ENCODE measurements at regions of chr9 and their contacts with region 1.

Region 1: DNA sequence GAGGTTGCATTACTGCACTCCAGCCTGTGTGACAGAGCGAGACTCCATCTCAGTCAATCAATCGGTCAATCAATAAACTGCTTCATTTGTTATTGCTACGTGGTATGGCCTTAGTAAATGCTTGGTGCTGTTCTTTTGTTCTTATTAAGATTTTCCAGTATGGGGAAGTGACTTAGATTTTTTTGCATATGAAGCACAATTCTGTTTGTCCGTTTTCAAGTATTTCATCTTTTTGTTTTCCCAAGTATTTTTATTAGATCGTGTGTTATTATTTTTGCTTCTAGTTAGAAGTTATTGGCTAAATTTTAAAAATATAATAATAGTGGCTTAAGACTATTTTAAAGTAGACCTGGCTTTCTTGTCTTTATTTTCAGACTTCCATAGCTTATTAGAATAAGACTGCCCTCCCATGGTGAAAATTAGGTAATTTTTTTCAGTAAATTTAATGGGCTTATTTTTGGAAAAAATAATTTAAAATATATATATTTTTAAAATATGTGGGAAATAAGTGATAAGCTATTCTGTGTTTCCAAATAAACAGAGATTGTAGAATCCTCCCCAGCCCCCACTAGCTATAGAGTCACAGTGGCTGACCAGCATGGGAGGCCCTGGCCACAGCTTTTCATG is 14.7 kb upstream of the OMD start:
- DNase-seq: no peak
- H3K4me3 ChIP-seq: no peak overlapping the region
- H3K27ac ChIP-seq: no peak overlapping the region
- H3K4me1 ChIP-seq: peaks cover 7% of the 10 kb centered on the region
- H3K27me3 ChIP-seq: no peaks in the 10 kb centered on the region
- CTCF ChIP-seq: peak in 1 of 2 donors; percentile 20

Region 2: DNA sequence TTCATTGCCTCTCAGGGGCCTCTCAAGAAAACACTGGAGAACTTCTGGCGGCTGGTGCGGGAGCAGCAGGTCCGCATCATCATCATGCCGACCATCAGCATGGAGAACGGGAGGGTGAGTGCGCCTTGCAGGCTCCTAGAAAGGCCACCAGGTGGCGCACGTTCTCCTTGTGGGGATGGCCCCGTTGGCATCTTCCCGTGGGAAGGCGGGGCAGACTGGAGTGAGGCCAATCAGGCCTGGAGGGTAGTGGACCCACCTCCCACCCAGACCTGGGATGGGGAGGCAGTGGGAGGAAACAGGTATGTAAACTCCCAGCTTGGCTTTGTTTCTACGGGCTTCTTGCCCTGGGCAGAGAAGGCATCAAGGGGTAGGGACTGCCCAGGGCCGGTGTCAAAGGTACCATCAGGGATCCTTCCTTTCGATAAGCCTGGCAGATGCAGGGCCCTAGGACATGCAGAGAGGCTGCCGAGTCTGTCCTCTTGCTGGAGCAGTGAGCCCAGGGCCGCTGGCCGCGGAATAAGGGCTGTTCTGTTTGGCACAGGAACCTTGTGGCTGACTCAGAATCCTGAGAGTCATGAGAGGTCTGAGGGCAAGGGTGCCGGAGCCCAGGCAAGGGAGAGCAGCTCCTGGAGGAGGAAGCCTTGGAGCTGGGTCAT is 304.9 kb before region 1 on chr9:
- CTCF ChIA-PET with region 1: no interaction called
- dilution Hi-C with region 1: no loop called
- in situ Hi-C with region 1: no loop called
- intact Hi-C with region 1: loop called (anchors 1 kb)
- DNase-seq: peak; percentile 80
- H3K4me3 ChIP-seq: peak overlapping the region in 1 of 3 experiments; percentile 31
- H3K27ac ChIP-seq: no peak overlapping the region
- H3K4me1 ChIP-seq: peaks cover 11% of the 10 kb centered on the region
- H3K27me3 ChIP-seq: no peaks in the 10 kb centered on the region
- CTCF ChIP-seq: peak; percentile 94 to 98

Region 3: GRCh38 chr9:92140074-92140753 is 298.8 kb before region 1 on chr9:
- CTCF ChIA-PET with region 1: no interaction called
- dilution Hi-C with region 1: no loop called
- in situ Hi-C with region 1: no loop called
- intact Hi-C with region 1: loop called (anchors 1 kb)
- DNase-seq: peak; percentile 52
- H3K4me3 ChIP-seq: no peak overlapping the region
- H3K27ac ChIP-seq: no peak overlapping the region
- H3K4me1 ChIP-seq: peaks cover 12% of the 10 kb centered on the region
- H3K27me3 ChIP-seq: no peaks in the 10 kb centered on the region
- CTCF ChIP-seq: peak; percentile 81 to 93

Region 4: GRCh38 chr9:92325269-92325990 is 113.6 kb before region 1 on chr9 and contains the starts of genes CENPP and NOL8:
- CTCF ChIA-PET with region 1: interaction called, 4 read pairs
- dilution Hi-C with region 1: no loop called
- in situ Hi-C with region 1: loop called (anchors 10 to 25 kb)
- intact Hi-C with region 1: loop called (anchors 1 kb)
- DNase-seq: peak; percentile 91
- H3K4me3 ChIP-seq: peak within 1 kb of the TSS; percentile 80 to 99 (median 93)
- H3K27ac ChIP-seq: peak within 1 kb of the TSS; percentile 98
- H3K4me1 ChIP-seq: peaks cover 27% of the 10 kb centered on the region
- H3K27me3 ChIP-seq: no peaks in the 10 kb centered on the region
- CTCF ChIP-seq: no peak
- total RNA-seq, gene CENPP: 3.0 to 7.5 TPM
- total RNA-seq, gene NOL8: 21.8 to 42.4 TPM

Region 5: DNA sequence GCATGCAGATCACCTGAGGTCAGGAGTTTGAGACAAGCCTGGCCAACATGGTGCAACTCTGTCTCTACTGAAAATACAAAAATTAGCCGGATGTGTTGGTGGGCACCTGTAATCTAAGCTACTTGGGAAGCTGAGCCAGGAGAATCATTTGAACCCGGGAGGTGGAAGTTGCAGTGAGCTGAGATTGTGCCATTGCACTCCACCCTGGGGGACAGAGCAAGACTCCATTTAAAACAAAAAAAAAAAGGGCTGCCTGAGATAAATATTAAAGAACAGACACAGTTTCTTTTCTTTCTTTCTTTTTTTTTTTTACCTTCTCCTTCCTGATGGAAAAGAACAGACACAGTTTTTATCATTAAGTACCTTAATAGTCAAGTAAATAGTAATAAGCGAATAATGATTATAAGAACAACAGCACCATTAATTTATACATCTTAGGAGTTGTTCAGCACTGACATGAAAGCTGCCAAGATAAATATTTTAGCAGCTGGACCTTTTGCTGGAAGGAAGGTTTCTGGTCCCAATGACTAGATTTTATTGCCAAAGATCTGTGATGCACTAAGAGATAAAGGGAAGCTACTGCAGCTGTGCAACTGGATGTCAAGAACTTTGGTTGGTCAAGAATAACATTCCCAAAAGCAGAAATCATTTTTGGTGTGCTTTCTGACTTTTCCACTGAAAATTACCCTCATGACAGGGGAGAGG is 106.3 kb before region 1 on chr9:
- CTCF ChIA-PET with region 1: interaction called, 4 read pairs
- dilution Hi-C with region 1: no loop called
- in situ Hi-C with region 1: loop called (anchors 10 to 25 kb)
- intact Hi-C with region 1: loop called (anchors 1 kb)
- DNase-seq: no peak
- H3K4me3 ChIP-seq: no peak overlapping the region
- H3K27ac ChIP-seq: no peak overlapping the region
- H3K4me1 ChIP-seq: peaks cover 2% of the 10 kb centered on the region
- H3K27me3 ChIP-seq: no peaks in the 10 kb centered on the region
- CTCF ChIP-seq: no peak

Region 6: DNA sequence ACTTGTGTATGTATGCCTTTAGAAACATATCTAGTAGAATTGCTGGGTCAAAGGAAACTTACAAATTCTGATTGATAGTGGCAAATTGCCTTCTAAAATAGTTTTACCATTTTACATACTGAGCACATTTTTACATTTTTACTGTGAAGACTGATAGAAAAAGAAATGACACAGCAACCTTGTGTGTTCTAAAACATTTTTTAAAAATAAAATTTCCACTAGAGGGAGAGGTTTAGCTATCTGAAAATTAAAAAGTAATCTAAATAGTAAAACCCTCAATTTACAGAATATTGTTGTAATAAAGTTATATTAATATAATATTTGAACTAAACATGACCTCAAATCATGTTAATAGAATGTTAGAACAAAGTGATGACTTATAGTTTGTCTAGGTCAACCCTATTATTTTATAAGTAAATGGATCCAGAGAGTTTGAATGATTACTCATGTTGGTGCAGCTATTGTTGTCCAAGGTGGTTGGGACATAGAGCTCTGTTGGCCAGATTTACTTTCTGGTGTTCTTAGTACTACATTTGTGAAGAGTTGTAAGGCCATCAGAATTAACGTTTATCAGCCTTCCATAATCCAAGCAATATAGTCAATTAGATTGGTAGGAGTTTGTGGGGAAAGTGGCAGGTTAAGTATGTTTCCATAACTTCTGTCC is 96.1 kb before region 1 on chr9:
- CTCF ChIA-PET with region 1: no interaction called
- dilution Hi-C with region 1: no loop called
- in situ Hi-C with region 1: loop called (anchors 10 to 25 kb)
- intact Hi-C with region 1: loop called (anchors 5 kb)
- DNase-seq: no peak
- H3K4me3 ChIP-seq: no peak overlapping the region
- H3K27ac ChIP-seq: no peak overlapping the region
- H3K4me1 ChIP-seq: no peaks in the 10 kb centered on the region
- H3K27me3 ChIP-seq: no peaks in the 10 kb centered on the region
- CTCF ChIP-seq: no peak

Region 7: GRCh38 chr9:92634712-92635605 is 195.9 kb after region 1 on chr9:
- CTCF ChIA-PET with region 1: no interaction called
- dilution Hi-C with region 1: no loop called
- in situ Hi-C with region 1: no loop called
- intact Hi-C with region 1: loop called (anchors 5 kb)
- DNase-seq: peak; percentile 44
- H3K4me3 ChIP-seq: no peak overlapping the region
- H3K27ac ChIP-seq: no peak overlapping the region
- H3K4me1 ChIP-seq: no peaks in the 10 kb centered on the region
- H3K27me3 ChIP-seq: no peaks in the 10 kb centered on the region
- CTCF ChIP-seq: peak; percentile 94 to 98